ENCODE measurements at regions of chr1 and their contacts with region 1.

Region 1: DNA sequence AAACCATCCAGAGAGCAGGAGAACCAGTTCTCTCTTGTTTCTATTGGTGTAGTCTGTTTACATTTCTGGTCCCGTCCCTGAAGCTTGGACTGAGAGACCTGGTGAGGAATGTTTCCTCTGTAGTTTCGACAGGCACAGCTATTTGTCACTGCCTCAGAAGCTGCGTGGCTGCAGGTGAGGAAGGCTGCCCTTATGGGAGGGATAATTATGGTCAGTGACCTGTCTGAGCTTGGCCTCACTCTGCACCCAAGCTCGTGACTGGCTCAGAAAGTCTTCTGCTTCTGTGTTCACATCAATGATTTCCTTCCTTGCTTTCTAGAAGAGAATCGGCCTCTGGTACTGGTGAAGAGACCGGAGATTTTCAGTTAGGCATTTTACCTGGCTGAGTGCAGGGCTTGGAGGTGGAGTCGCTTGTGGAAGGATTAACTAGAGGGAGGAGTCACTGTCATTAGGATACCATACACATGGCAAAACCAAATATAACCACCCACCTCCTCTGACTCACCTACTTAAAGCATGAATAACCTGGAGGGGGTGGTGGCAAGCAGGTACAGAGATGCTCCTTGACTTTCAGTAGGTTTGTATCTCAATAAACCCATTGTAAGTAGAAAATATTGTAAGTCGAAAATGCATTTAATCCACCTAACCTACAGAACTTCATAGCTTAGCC is 19.9 kb upstream of the WDR26 start:
- DNase-seq: peak; percentile 77
- ATAC-seq: peak; percentile 94
- H3K4me3 ChIP-seq: no peak overlapping the region
- H3K27ac ChIP-seq: peak overlapping the region; percentile 41
- H3K4me1 ChIP-seq: peaks cover 28% of the 10 kb centered on the region
- H3K27me3 ChIP-seq: no peaks in the 10 kb centered on the region
- CTCF ChIP-seq: no peak
- EP300 ChIP-seq: no peak
- POLR2A ChIP-seq: peak in 1 of 2 experiments; percentile 42; a peak in 2 of 4 replicates
- RAD21 ChIP-seq: no peak

Region 2: GRCh38 chr1:224113918-224114786 is 340.4 kb before region 1 on chr1 and contains the start of gene FBXO28:
- CTCF ChIA-PET with region 1: interaction called, 3 read pairs
- POLR2A ChIA-PET with region 1: no interaction called
- in situ Hi-C with region 1: no loop called
- intact Hi-C with region 1: loop called (anchors 10 kb)
- DNase-seq: peak; percentile 91
- ATAC-seq: peak; percentile 98
- H3K4me3 ChIP-seq: peak within 1 kb of the TSS; percentile 88 to 96 (median 89)
- H3K27ac ChIP-seq: peak within 1 kb of the TSS; percentile 77
- H3K4me1 ChIP-seq: peaks cover 20% of the 10 kb centered on the region
- H3K27me3 ChIP-seq: peaks cover 0 to 3% of the 10 kb centered on the region in 2 experiments; a peak in 1 of 5 replicates
- CTCF ChIP-seq: no peak
- EP300 ChIP-seq: 0 out of 4 replicates have a peak, but pooled peaks of 1 of the 2 experiments have one; percentile 30
- POLR2A ChIP-seq: peak; percentile 87 to 94
- RAD21 ChIP-seq: peak; percentile 41; the same call in 1 of the 2 replicates
- total RNA-seq, gene FBXO28: 29.1 and 38.2 TPM in 2 replicates

Region 3: GRCh38 chr1:224356685-224357625 is 97.6 kb before region 1 on chr1 and contains the start of gene CNIH4:
- CTCF ChIA-PET with region 1: no interaction called
- POLR2A ChIA-PET with region 1: no interaction called
- in situ Hi-C with region 1: no loop called
- intact Hi-C with region 1: loop called (anchors 5 kb)
- DNase-seq: peak; percentile 88
- ATAC-seq: peak; percentile 98
- H3K4me3 ChIP-seq: peak within 1 kb of the TSS; percentile 71 to 95 (median 90)
- H3K27ac ChIP-seq: peak within 1 kb of the TSS; percentile 43
- H3K4me1 ChIP-seq: peaks cover 43% of the 10 kb centered on the region
- H3K27me3 ChIP-seq: no peaks in the 10 kb centered on the region; a peak in 1 of 5 replicates
- CTCF ChIP-seq: no peak
- EP300 ChIP-seq: no peak
- POLR2A ChIP-seq: peak; percentile 76 to 91
- RAD21 ChIP-seq: peak; percentile 50; the same call in 1 of the 2 replicates
- total RNA-seq, gene CNIH4: 30.3 and 51.8 TPM in 2 replicates

Region 4: GRCh38 chr1:224392411-224393249 is 61.9 kb before region 1 on chr1:
- CTCF ChIA-PET with region 1: no interaction called
- POLR2A ChIA-PET with region 1: no interaction called
- in situ Hi-C with region 1: no loop called
- intact Hi-C with region 1: loop called (anchors 10 kb)
- DNase-seq: no peak
- ATAC-seq: no peak
- H3K4me3 ChIP-seq: no peak overlapping the region
- H3K27ac ChIP-seq: no peak overlapping the region
- H3K4me1 ChIP-seq: no peaks in the 10 kb centered on the region
- H3K27me3 ChIP-seq: no peaks in the 10 kb centered on the region
- CTCF ChIP-seq: no peak
- EP300 ChIP-seq: no peak
- POLR2A ChIP-seq: no peak
- RAD21 ChIP-seq: no peak

Region 5: DNA sequence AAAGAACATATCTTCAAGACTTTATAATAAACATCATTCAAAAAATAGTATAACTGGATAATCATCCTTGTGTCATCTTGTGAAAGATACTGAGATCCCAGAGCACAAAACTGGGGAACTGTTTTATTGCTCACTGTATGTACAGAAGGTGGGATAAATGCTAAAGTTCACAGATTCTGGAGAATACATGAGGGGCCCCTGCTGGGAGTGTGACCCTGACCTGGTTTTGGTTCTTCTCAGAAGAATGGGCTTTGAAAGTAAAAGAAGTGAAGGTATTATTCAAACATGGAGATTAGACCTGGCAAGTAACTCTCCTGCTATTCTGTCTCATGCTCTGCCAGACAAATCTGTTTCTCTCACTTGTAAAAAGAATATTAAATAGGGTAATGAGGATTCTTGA is 34.4 kb before region 1 on chr1:
- CTCF ChIA-PET with region 1: no interaction called
- POLR2A ChIA-PET with region 1: no interaction called
- in situ Hi-C with region 1: no loop called
- intact Hi-C with region 1: loop called (anchors 5 kb)
- DNase-seq: no peak
- ATAC-seq: peak; percentile 45; the same call in 1 of the 3 replicates
- H3K4me3 ChIP-seq: no peak overlapping the region
- H3K27ac ChIP-seq: no peak overlapping the region
- H3K4me1 ChIP-seq: peaks cover 20% of the 10 kb centered on the region
- H3K27me3 ChIP-seq: no peaks in the 10 kb centered on the region
- CTCF ChIP-seq: no peak
- EP300 ChIP-seq: no peak
- POLR2A ChIP-seq: no peak
- RAD21 ChIP-seq: no peak

Region 6: DNA sequence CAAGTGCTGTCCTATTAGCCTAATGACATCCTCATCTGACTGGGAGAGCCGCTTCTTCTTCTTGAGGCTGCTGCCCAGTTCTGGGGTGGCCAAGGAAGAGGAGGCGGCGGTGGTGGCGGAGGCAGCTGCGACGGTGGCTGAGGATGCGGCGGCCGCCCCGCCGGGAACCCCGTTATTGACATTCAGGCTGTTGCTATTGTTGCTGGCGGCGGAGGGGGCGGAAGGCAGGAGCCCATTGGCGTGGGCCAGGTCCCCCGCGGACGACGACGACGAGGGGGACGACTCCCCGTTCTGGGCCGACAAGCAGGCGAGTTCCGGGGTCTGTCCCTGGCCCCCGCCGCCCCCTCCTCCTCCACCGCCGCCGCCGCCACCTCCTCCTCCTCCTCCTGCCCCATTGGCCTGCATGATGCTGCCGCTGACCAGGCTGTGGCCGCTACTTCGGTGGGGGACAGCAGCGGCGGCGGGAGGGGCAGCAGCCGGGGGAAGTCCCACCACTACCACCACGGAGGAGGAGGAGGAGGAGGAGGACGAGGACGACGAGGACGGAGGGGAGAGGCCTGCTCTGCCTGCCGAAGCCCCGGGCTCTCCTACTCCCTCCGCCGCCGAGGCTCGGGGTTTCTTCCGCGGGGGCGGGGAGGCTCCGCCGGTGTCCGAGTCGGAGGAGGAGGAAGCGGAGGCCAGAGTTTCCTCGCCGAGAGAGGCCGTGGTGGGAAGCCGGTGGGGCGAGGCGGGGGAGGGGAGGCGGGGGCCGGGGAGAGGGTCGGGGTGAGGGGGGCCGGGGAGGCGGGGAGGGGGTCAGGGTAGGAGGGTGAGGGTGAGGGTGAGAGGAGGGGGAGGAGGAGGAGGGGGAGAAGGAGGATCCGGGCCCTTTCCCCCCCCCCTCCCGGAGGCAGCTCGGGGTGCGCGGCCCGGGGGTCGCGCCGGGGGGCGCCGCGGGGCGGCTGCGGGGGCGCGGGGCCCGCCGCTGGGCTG is 20.5 kb before region 1 on chr1:
- CTCF ChIA-PET with region 1: no interaction called
- POLR2A ChIA-PET with region 1: interaction called, 5 read pairs
- in situ Hi-C with region 1: no loop called
- intact Hi-C with region 1: loop called (anchors 1 kb)
- DNase-seq: no peak
- ATAC-seq: peak; percentile 18
- H3K4me3 ChIP-seq: peak overlapping the region; percentile 89 to 95 (median 90)
- H3K27ac ChIP-seq: peak overlapping the region; percentile 65
- H3K4me1 ChIP-seq: peaks cover 60% of the 10 kb centered on the region
- H3K27me3 ChIP-seq: no peaks in the 10 kb centered on the region; a peak in 1 of 5 replicates
- CTCF ChIP-seq: no peak
- EP300 ChIP-seq: no peak
- POLR2A ChIP-seq: no peak
- RAD21 ChIP-seq: no peak

Region 7: GRCh38 chr1:224438989-224439388 is 15.5 kb before region 1 on chr1:
- CTCF ChIA-PET with region 1: no interaction called
- POLR2A ChIA-PET with region 1: interaction called, 5 read pairs
- in situ Hi-C with region 1: no loop called
- intact Hi-C with region 1: loop called (anchors 2 kb)
- DNase-seq: peak; percentile 91
- ATAC-seq: peak; percentile 81
- H3K4me3 ChIP-seq: peak overlapping the region in 1 of 3 experiments; percentile 17; a peak in 1 of 6 replicates
- H3K27ac ChIP-seq: peak overlapping the region; percentile 57
- H3K4me1 ChIP-seq: peaks cover 35% of the 10 kb centered on the region
- H3K27me3 ChIP-seq: no peaks in the 10 kb centered on the region; a peak in 1 of 5 replicates
- CTCF ChIP-seq: no peak
- EP300 ChIP-seq: peak in 1 of 2 experiments; percentile 43; a peak in 1 of 4 replicates
- POLR2A ChIP-seq: no peak
- RAD21 ChIP-seq: no peak

Measured in HepG2 (cell line).